GM12878 (cell line): ENCODE measurements at regions of chr18 and their contacts with region 1.

Region 1: DNA sequence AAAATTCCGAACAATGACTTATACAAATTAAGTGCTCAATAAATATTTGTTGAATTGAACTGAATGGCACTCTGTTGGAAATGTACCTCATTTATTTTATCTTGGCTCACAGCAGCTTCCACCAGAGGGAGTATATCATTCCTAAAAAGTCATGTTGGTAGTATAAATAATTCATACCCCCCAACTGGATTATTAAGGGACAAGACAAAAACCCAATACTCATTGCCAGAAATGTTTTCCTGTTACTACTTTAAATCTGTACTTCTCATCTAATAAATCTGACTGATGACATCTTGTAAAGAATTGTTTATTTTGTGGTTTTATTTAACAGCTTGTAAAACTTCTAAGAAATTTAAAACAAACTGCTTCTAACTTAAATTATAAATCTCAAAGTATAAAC is 163.9 kb downstream of the CDH2 start:
- DNase-seq: no peak
- ATAC-seq: no peak
- H3K4me3 ChIP-seq: no peak overlapping the region
- H3K27ac ChIP-seq: no peak overlapping the region
- H3K4me1 ChIP-seq: no peaks in the 10 kb centered on the region
- H3K27me3 ChIP-seq: no peaks in the 10 kb centered on the region
- CTCF ChIP-seq: 0 out of 6 replicates have a peak, but pooled peaks of 1 of the 3 experiments have one; percentile 2
- EP300 ChIP-seq: no peak
- POLR2A ChIP-seq: no peak
- RAD21 ChIP-seq: no peak

Region 2: DNA sequence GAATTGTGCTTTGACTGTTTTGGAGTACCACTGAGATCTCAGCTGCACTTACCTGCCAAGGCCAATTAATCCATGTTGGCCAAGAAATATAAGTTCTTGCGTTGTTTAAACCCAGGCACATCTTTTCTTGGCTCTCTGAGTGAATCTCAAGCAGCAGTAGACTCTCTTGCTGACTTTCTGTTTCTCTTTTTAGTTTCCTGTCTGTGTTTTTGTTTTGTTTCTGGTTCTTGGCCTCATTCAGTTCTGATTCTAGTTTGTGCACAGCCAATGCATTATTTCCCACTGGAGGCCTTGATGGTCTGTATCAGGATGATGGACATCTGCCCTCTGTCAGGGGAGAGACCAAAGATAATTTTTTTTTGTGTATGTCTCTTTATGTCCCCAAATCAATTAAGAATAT is 215.6 kb before region 1 on chr18:
- CTCF ChIA-PET with region 1: no interaction called
- POLR2A ChIA-PET with region 1: no interaction called
- RAD21 ChIA-PET with region 1: no interaction called
- SMC1A ChIA-PET with region 1: no interaction called
- in situ Hi-C with region 1: no loop called
- intact Hi-C with region 1: no loop called
- DNase-seq: peak; percentile 12
- ATAC-seq: peak; percentile 52
- H3K4me3 ChIP-seq: no peak overlapping the region
- H3K27ac ChIP-seq: no peak overlapping the region
- H3K4me1 ChIP-seq: no peaks in the 10 kb centered on the region
- H3K27me3 ChIP-seq: no peaks in the 10 kb centered on the region
- CTCF ChIP-seq: no peak
- EP300 ChIP-seq: no peak
- POLR2A ChIP-seq: no peak
- RAD21 ChIP-seq: no peak

Region 3: DNA sequence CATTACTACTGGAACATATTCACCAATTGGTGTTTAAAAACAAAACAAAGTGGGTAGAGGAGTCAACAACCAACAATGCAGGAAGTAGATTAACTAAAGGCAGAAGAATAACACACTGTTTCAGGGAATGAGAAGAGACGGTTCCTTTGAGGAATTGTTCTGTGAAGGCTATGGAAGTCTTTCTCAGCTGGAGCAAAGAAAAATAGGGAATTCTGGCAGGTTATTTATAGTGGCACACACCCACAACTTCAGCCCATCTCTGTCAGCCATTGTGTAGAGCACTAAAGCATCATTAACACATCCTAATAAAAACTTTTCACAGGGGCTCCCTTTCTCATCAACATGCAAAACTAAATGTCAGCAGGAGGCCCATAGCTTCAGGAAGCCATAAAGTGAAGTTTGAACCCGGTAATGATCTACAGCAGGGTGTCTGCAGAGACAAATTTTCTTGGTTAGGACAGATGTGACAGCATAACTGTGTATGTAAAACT is 50.2 kb after region 1 on chr18:
- CTCF ChIA-PET with region 1: no interaction called
- POLR2A ChIA-PET with region 1: no interaction called
- RAD21 ChIA-PET with region 1: no interaction called
- SMC1A ChIA-PET with region 1: no interaction called
- in situ Hi-C with region 1: no loop called
- intact Hi-C with region 1: no loop called
- DNase-seq: no peak
- ATAC-seq: no peak
- H3K4me3 ChIP-seq: no peak overlapping the region
- H3K27ac ChIP-seq: no peak overlapping the region
- H3K4me1 ChIP-seq: no peaks in the 10 kb centered on the region
- H3K27me3 ChIP-seq: no peaks in the 10 kb centered on the region
- CTCF ChIP-seq: no peak
- EP300 ChIP-seq: no peak
- POLR2A ChIP-seq: no peak
- RAD21 ChIP-seq: no peak

Region 4: DNA sequence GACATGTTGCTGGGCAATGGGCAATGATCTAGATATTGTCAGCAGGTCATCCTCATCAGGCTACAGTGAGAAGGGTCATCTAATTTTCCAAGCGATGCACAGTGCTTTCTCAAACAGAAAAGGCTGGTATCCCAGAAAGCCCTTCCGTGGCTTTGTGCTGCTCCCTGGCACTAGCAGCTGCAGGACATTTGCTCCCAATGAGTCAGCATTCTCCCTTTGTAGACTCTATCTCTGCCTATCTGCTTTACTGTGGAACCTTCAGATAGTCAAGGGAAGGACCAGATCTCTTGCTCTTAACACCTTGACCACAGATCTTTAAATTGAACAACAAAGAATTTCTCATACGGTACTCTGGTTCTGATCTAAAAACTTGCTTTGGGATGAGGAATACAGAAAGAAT is 62.4 kb after region 1 on chr18:
- CTCF ChIA-PET with region 1: no interaction called
- POLR2A ChIA-PET with region 1: interaction called, 3 read pairs
- RAD21 ChIA-PET with region 1: no interaction called
- SMC1A ChIA-PET with region 1: no interaction called
- in situ Hi-C with region 1: loop called (anchors 10 kb)
- intact Hi-C with region 1: no loop called
- DNase-seq: no peak
- ATAC-seq: no peak
- H3K4me3 ChIP-seq: no peak overlapping the region
- H3K27ac ChIP-seq: no peak overlapping the region
- H3K4me1 ChIP-seq: no peaks in the 10 kb centered on the region
- H3K27me3 ChIP-seq: no peaks in the 10 kb centered on the region
- CTCF ChIP-seq: no peak
- EP300 ChIP-seq: no peak
- POLR2A ChIP-seq: no peak
- RAD21 ChIP-seq: no peak